ENCODE measurements at regions of chr15 and their contacts with region 1.

Region 1: DNA sequence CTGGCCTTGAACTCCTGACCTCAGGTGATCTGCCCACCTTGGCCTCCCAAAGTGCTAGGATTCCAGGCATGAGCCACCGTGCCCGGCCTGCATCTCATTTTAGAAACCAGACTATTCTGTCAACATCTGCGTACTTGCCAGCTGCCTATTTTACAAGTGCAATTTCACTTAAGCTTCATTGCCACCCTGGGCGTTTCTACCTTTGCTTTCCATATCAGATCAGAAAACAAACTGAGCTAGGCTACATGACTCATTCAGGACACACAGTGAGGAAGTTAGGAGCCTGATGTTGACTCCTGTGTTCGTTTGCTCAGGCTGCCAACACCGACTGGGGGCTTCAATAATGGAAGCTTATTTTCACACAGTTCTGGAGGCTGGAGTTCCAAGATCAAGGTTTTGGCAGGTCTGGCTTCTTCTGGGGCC is 42.3 kb upstream of the KLHL25 start:
- DNase-seq: peak in 1 of 3 donors; percentile 48
- ATAC-seq: peak in 2 of 4 donors; percentile 52 to 78
- H3K4me3 ChIP-seq: no peak overlapping the region
- H3K27ac ChIP-seq: peak overlapping the region in 1 of 3 donors; percentile 31
- H3K4me1 ChIP-seq: peaks cover 0 to 7% (median 0%) of the 10 kb centered on the region in 4 donors
- H3K27me3 ChIP-seq: no peaks in the 10 kb centered on the region
- CTCF ChIP-seq: no peak
- POLR2A ChIP-seq: peak; percentile 23

Region 2: GRCh38 chr15:85718271-85718971 is 118.6 kb before region 1 on chr15:
- intact Hi-C with region 1: no loop called
- DNase-seq: no peak
- ATAC-seq: no peak
- H3K4me3 ChIP-seq: no peak overlapping the region
- H3K27ac ChIP-seq: no peak overlapping the region
- H3K4me1 ChIP-seq: peaks cover 0 to 17% (median 10%) of the 10 kb centered on the region in 4 donors
- H3K27me3 ChIP-seq: no peaks in the 10 kb centered on the region
- CTCF ChIP-seq: no peak
- POLR2A ChIP-seq: no peak

Region 3: DNA sequence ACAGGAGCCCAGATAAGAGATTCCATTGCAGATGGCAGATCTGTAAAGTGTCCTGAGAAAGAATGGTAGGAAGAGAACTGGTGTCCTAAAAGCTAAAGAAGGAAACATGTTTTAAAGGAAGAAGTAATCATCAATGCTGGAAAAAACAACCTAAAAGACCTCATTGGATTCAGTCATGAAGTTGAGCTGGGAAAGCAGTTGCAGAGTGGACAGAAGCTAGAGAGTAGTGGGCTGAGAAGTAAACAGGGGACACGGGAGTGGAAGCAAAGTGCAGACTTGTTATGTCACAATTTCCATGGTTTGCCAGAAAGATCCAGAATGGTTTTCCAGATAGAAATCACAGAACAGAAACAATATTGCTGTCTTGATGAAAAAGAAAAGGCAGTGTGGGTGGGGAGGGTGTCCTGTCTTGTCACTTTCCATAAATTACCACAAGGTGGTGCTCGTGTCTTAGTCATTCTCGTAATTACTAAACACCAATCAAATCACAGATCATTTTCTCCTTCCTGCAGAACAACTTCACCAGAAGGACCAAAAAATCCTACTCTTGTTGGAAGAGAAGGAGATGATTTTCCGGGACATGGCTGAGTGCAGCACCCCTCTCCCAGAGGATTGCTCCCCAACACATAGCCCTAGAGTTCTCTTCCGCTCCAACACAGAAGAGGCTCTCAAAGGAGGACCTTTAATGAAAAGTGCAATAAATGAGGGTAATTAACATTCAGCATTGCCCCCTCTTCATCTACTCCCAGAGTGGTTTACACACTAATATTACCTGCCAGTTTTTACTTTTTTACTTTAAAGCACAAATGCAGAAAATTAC is 106.8 kb before region 1 on chr15:
- intact Hi-C with region 1: loop called in 1 of 2 experiments (anchors 5 kb)
- DNase-seq: no peak
- ATAC-seq: peak; percentile 80 to 91 (median 86)
- H3K4me3 ChIP-seq: no peak overlapping the region
- H3K27ac ChIP-seq: no peak overlapping the region
- H3K4me1 ChIP-seq: peaks cover 0 to 12% (median 0%) of the 10 kb centered on the region in 4 donors
- H3K27me3 ChIP-seq: no peaks in the 10 kb centered on the region
- CTCF ChIP-seq: peak; percentile 68 to 85 (median 73)
- POLR2A ChIP-seq: no peak

Region 4: GRCh38 chr15:85910834-85911233 is 73.8 kb after region 1 on chr15:
- intact Hi-C with region 1: no loop called
- DNase-seq: peak in 1 of 3 donors; percentile 27
- ATAC-seq: peak; percentile 44 to 96 (median 88)
- H3K4me3 ChIP-seq: no peak overlapping the region
- H3K27ac ChIP-seq: no peak overlapping the region
- H3K4me1 ChIP-seq: peaks cover 0 to 4% (median 0%) of the 10 kb centered on the region in 4 donors
- H3K27me3 ChIP-seq: no peaks in the 10 kb centered on the region
- CTCF ChIP-seq: no peak
- POLR2A ChIP-seq: no peak

Region 5: GRCh38 chr15:85964471-85964870 is 127.4 kb after region 1 on chr15:
- intact Hi-C with region 1: no loop called
- DNase-seq: no peak
- ATAC-seq: no peak
- H3K4me3 ChIP-seq: no peak overlapping the region
- H3K27ac ChIP-seq: no peak overlapping the region
- H3K4me1 ChIP-seq: no peaks in the 10 kb centered on the region
- H3K27me3 ChIP-seq: no peaks in the 10 kb centered on the region
- CTCF ChIP-seq: no peak
- POLR2A ChIP-seq: no peak